Activated CD4-positive, alpha-beta T cell treated with anti-CD3 and anti-CD28 coated beads for 36 hours (primary cell): ENCODE measurements at regions of chr3 and their contacts with region 1.

Region 1: GRCh38 chr3:59566481-59566975 is 516.7 kb upstream of the CFAP20DC start:
- DNase-seq: peak; percentile 46
- ATAC-seq: peak; percentile 98
- H3K4me3 Mint-ChIP-seq: no peak overlapping the region
- H3K27ac Mint-ChIP-seq: peak overlapping the region; percentile 45
- H3K4me1 Mint-ChIP-seq: peaks cover 17% of the 10 kb centered on the region
- H3K27me3 Mint-ChIP-seq: peaks cover 4% of the 10 kb centered on the region

Region 2: GRCh38 chr3:59418836-59419235 is 147.7 kb before region 1 on chr3:
- CTCF ChIA-PET with region 1: no interaction called
- POLR2A ChIA-PET with region 1: no interaction called
- intact Hi-C with region 1: no loop called
- DNase-seq: no peak
- ATAC-seq: no peak
- H3K4me3 Mint-ChIP-seq: no peak overlapping the region
- H3K27ac Mint-ChIP-seq: no peak overlapping the region
- H3K4me1 Mint-ChIP-seq: peaks cover 31% of the 10 kb centered on the region
- H3K27me3 Mint-ChIP-seq: peaks cover 9% of the 10 kb centered on the region

Region 3: DNA sequence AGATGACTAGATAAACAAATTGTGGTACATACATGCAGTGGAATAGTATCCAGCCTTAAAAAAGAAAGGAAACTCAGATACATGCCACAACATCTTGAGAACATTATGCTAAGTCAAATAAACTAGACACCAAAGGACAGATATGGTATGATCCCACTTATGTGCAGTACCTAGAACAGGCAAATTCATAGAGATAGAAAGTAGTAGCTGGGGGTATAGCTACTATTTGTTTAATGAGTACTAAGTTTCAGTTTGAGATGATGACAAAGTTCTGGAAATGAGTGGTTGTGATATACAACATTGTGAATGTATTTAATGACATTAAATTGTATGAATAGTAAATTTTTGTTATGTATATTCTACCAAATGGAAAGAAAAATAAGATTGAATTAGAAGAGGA is 39.5 kb before region 1 on chr3:
- CTCF ChIA-PET with region 1: no interaction called
- POLR2A ChIA-PET with region 1: no interaction called
- intact Hi-C with region 1: loop called in 1 of 2 experiments (anchors 2 kb)
- DNase-seq: no peak
- ATAC-seq: peak; percentile 98
- H3K4me3 Mint-ChIP-seq: no peak overlapping the region
- H3K27ac Mint-ChIP-seq: peak overlapping the region; percentile 55
- H3K4me1 Mint-ChIP-seq: peaks cover 18% of the 10 kb centered on the region
- H3K27me3 Mint-ChIP-seq: peaks cover 3% of the 10 kb centered on the region

Region 4: GRCh38 chr3:59660852-59661625 is 94.5 kb after region 1 on chr3:
- CTCF ChIA-PET with region 1: no interaction called
- POLR2A ChIA-PET with region 1: no interaction called
- intact Hi-C with region 1: no loop called
- DNase-seq: no peak
- ATAC-seq: no peak
- H3K4me3 Mint-ChIP-seq: no peak overlapping the region
- H3K27ac Mint-ChIP-seq: no peak overlapping the region
- H3K4me1 Mint-ChIP-seq: no peaks in the 10 kb centered on the region
- H3K27me3 Mint-ChIP-seq: no peaks in the 10 kb centered on the region